Breast epithelium (tissue), 4 donors: ENCODE measurements at regions of chr11 and their contacts with region 1.

Region 1: DNA sequence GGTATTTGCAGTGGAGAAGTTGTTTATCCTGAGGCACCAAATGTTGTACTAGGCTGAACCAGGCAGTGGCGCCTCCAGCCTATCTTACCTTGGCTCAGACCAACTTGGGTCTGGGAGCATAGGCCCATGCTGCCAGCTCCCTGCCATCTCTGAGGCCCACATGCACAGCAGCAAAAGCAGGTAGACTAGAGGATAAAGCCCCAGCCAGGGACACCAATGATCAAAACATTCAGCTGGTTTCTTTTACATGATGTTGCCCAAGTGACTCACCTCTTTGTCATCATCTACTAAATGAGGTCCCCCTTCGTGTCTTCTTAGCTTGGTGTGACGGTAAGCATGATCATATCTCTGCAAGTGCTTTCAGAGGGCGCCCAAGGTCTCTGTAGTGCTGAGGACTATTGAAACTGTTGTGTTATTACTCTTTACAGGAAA is 112.1 kb upstream of the DRD2 start:
- DNase-seq: no peak
- H3K4me3 ChIP-seq: no peak overlapping the region
- H3K27ac ChIP-seq: no peak overlapping the region
- H3K4me1 ChIP-seq: no peaks in the 10 kb centered on the region
- H3K27me3 ChIP-seq: no peaks in the 10 kb centered on the region
- CTCF ChIP-seq: no peak
- POLR2A ChIP-seq: no peak

Region 2: GRCh38 chr11:112817376-112817775 is 769.9 kb before region 1 on chr11:
- intact Hi-C with region 1: loop called (anchors 5 kb)
- DNase-seq: no peak
- H3K4me3 ChIP-seq: no peak overlapping the region
- H3K27ac ChIP-seq: no peak overlapping the region
- H3K4me1 ChIP-seq: no peaks in the 10 kb centered on the region
- H3K27me3 ChIP-seq: no peaks in the 10 kb centered on the region
- CTCF ChIP-seq: no peak
- POLR2A ChIP-seq: no peak